ENCODE measurements at regions of chr7 and their contacts with region 1.

Region 1: GRCh38 chr7:127892488-127893314 is 138.5 kb downstream of the LRRC4 start:
- DNase-seq: peak; percentile 73 to 93 (median 83)
- ATAC-seq: peak; percentile 74
- H3K4me3 ChIP-seq: no peak overlapping the region
- H3K27ac ChIP-seq: peak overlapping the region; percentile 47
- H3K4me1 ChIP-seq: peaks cover 44 to 75% of the 10 kb centered on the region in 2 experiments
- H3K27me3 ChIP-seq: no peaks in the 10 kb centered on the region
- CTCF ChIP-seq: no peak; a peak in 1 of 6 replicates
- EP300 ChIP-seq: peak; percentile 96
- POLR2A ChIP-seq: no peak
- RAD21 ChIP-seq: 0 out of 4 replicates have a peak, but pooled peaks have one; percentile 8 to 23

Region 2: DNA sequence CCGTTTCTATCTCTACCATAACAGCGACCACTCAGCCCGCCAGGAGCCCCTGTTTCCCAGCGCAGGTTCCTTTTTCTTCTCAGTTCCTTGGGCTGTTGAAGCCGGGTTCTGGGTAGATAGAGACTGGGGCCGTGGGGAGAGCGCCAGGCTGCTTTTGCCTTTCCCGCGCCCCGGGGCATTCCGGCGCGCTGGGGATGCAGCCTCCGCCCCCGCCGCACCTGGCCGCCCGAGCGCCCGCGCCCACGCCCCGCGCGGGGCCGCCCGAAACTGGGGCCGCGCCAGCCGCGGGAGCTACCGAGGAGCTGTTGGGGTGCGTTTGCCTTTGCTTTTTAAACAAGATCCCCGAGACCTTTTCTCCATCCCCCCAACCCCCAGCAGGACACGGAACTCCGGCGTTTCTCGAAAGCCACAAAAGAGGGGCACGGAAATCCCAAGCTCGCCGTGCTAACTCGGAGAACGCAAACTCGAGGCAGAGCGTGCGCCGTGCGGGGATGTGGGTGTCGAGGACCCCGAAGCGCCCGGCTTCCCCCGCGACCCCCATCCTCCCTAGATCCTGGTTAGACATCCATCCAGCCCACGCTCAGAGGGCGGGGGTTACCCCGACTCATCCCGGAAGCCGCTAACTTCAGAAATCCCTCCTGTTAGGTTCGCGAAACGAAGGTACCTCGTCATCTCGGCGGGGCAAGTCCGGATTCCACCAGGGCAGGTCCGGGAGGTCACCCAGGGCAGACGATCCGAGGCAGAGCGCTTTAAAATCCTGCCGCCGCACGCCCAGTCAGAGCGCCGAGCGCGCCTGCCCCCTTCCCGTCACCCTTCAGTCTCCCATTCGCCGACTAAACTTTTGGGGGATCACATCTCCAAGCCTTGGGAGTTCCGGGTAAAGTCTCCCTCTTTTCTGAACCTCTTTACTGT is 641.0 kb before region 1 on chr7:
- CTCF ChIA-PET with region 1: no interaction called
- POLR2A ChIA-PET with region 1: no interaction called
- in situ Hi-C with region 1: no loop called
- intact Hi-C with region 1: no loop called
- DNase-seq: no peak
- ATAC-seq: no peak
- H3K4me3 ChIP-seq: no peak overlapping the region
- H3K27ac ChIP-seq: no peak overlapping the region
- H3K4me1 ChIP-seq: peaks cover 0 to 25% of the 10 kb centered on the region in 2 experiments; a peak in 3 of 5 replicates
- H3K27me3 ChIP-seq: peaks cover 15 to 44% of the 10 kb centered on the region in 2 experiments; a peak in 4 of 5 replicates
- CTCF ChIP-seq: no peak
- EP300 ChIP-seq: no peak
- POLR2A ChIP-seq: no peak
- RAD21 ChIP-seq: no peak

Region 3: DNA sequence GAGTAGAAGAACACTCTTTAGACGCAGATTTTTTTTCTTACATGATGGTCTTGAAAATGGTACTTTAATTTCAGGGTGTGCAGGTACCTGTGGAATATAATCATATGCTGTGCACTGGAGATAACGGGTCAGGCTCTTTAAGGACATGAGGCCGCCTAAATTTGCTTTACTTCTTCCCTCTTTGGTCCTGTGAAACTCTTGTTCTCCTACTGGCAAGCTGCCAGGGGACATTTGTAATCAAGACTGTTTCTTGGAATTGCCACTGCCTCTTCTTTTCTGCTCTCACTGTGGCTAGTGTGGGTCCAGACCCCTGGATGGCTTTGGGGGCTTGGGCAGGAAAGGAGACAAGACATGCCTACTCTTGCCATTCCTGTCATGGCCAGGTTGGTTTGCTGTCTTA is 94.7 kb before region 1 on chr7:
- CTCF ChIA-PET with region 1: no interaction called
- POLR2A ChIA-PET with region 1: no interaction called
- in situ Hi-C with region 1: no loop called
- intact Hi-C with region 1: loop called (anchors 5 kb)
- DNase-seq: peak; percentile 31 to 94 (median 60)
- ATAC-seq: peak; percentile 77
- H3K4me3 ChIP-seq: no peak overlapping the region
- H3K27ac ChIP-seq: peak overlapping the region; percentile 42
- H3K4me1 ChIP-seq: peaks cover 20 to 29% of the 10 kb centered on the region in 2 experiments
- H3K27me3 ChIP-seq: no peaks in the 10 kb centered on the region
- CTCF ChIP-seq: no peak
- EP300 ChIP-seq: peak; percentile 44
- POLR2A ChIP-seq: no peak
- RAD21 ChIP-seq: no peak

Region 4: GRCh38 chr7:127844707-127845331 is 47.9 kb before region 1 on chr7:
- CTCF ChIA-PET with region 1: no interaction called
- POLR2A ChIA-PET with region 1: interaction called, 3 read pairs
- in situ Hi-C with region 1: no loop called
- intact Hi-C with region 1: loop called (anchors 2 kb)
- DNase-seq: peak; percentile 36 to 62 (median 46)
- ATAC-seq: peak; percentile 84
- H3K4me3 ChIP-seq: no peak overlapping the region
- H3K27ac ChIP-seq: peak overlapping the region; percentile 30; the same call in 1 of the 3 replicates
- H3K4me1 ChIP-seq: peaks cover 6 to 15% of the 10 kb centered on the region in 2 experiments; a peak in 4 of 5 replicates
- H3K27me3 ChIP-seq: no peaks in the 10 kb centered on the region
- CTCF ChIP-seq: 0 out of 6 replicates have a peak, but pooled peaks of 1 of the 3 experiments have one; percentile 9
- EP300 ChIP-seq: 0 out of 2 replicates have a peak, but pooled peaks have one; percentile 16
- POLR2A ChIP-seq: no peak
- RAD21 ChIP-seq: peak in 1 of 2 experiments; percentile 30; a peak in 1 of 4 replicates

Region 5: DNA sequence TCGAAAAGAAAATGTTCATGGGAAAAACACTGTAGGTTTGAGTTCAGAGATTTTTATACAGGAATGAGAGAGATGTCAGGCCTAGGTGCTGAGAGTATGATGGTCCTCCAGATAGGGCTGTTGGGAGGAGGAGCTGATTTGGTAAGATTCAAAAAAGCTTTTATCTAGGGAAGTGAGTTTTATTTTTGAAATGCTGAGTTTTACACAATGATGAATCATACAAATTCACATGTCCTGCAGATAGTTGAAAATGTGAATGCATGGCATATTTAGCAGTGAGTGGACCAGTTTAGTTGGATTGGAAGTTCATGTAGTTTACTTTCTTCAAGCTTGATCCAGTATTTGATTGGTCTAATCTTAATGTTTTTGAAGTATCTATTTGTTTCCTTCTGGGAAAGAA is 16.3 kb before region 1 on chr7:
- CTCF ChIA-PET with region 1: no interaction called
- POLR2A ChIA-PET with region 1: interaction called, 13 read pairs
- in situ Hi-C with region 1: no loop called
- intact Hi-C with region 1: no loop called
- DNase-seq: no peak
- ATAC-seq: no peak
- H3K4me3 ChIP-seq: no peak overlapping the region
- H3K27ac ChIP-seq: no peak overlapping the region
- H3K4me1 ChIP-seq: peaks cover 2 to 23% of the 10 kb centered on the region in 2 experiments; a peak in 3 of 5 replicates
- H3K27me3 ChIP-seq: no peaks in the 10 kb centered on the region
- CTCF ChIP-seq: no peak
- EP300 ChIP-seq: no peak
- POLR2A ChIP-seq: no peak
- RAD21 ChIP-seq: no peak